A673 (cell line): ENCODE measurements at regions of chr3 and their contacts with region 1.

Region 1: DNA sequence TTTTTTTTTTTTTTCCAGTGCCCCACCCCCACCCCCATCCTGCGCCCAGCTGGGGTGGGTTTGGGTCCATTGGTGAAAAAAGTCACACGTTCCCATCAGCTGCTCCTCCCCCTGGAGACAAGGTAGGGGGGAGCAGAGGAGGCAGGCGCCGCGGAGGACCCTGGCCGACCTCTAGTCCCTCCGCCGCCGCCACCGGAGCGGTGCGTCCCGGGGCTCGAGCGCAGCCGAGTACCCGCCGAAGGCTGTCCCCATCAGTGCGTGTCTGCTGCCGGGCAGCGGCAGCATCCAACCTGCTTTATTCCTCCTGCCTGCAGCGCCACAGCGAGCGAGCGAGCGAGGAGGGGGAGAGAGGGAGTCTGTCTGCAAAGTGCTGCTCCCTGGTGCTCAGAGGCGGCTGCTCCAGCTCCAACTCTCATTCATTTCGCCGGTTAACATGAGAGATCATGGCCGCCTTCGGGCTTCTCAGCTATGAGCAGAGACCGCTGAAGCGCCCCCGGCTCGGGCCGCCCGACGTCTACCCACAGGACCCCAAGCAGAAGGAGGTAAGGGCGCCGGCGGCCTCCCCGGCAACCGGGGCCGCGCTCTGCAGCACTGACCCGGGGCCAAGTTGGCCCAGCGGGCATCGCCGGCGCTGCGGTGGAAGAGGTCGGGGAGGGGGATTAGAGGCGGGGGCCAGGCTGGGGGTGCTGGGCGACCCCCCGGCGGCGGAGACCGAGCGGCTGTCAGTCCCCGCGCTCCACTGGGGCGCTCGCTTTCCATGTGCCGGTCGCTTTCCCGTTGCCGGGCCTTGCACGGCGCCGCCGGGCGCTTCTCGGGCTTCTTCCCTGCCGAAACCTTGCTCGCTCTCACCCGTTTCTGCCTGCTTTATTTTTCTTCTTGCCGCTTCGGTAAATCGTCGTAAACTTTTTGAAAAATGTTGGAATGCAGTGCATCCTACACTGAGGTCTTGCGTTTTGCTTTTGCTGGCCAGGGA is 1.3 kb downstream of the MED12L start:
- DNase-seq: peak; percentile 93
- H3K4me3 ChIP-seq: peak overlapping the region; percentile 56
- H3K27ac ChIP-seq: no peak overlapping the region
- H3K4me1 ChIP-seq: peaks cover 6% of the 10 kb centered on the region
- H3K27me3 ChIP-seq: peaks cover 45% of the 10 kb centered on the region
- CTCF ChIP-seq: peak; percentile 66

Region 2: DNA sequence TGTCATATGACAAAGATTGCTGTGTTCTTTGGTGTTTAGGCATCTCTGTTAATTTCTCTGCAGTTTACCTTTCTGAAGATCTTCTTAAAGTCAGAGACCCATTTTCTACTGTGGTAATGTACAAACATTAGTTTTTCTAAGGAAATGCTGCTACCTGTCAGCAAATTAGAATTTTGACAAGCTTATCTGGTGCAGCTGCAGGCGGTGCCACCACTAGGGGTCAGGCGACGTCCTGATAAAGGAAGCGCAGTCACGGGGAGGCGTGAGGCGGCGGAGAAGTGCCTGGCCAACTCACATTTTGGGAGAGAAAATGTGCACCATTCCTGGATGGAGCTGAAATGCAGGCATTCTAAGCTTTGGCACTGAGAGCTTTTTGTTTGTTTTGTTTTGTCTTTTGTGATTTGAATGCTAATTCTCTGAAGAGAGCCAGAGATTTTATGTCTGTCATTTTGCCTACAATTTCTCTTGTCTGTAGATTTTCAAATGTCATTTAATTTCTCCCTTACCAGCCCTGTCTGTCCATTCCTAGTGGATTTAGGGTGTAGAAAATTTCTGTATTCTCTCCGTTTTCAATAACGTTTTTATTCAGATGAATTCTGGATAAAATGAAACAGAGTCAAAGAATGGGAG is 298.9 kb before region 1 on chr3:
- CTCF ChIA-PET with region 1: no interaction called
- POLR2A ChIA-PET with region 1: no interaction called
- intact Hi-C with region 1: loop called (anchors 10 kb)
- DNase-seq: peak; percentile 84
- H3K4me3 ChIP-seq: no peak overlapping the region
- H3K27ac ChIP-seq: no peak overlapping the region
- H3K4me1 ChIP-seq: no peaks in the 10 kb centered on the region
- H3K27me3 ChIP-seq: no peaks in the 10 kb centered on the region
- CTCF ChIP-seq: peak; percentile 97

Region 3: GRCh38 chr3:151008699-151009098 is 78.1 kb before region 1 on chr3:
- CTCF ChIA-PET with region 1: interaction called, 4 read pairs
- POLR2A ChIA-PET with region 1: no interaction called
- intact Hi-C with region 1: loop called (anchors 5 kb)
- DNase-seq: peak; percentile 53
- H3K4me3 ChIP-seq: no peak overlapping the region
- H3K27ac ChIP-seq: no peak overlapping the region
- H3K4me1 ChIP-seq: peaks cover 11% of the 10 kb centered on the region
- H3K27me3 ChIP-seq: peaks cover 4% of the 10 kb centered on the region
- CTCF ChIP-seq: peak; percentile 56